Activated CD4-positive, alpha-beta T cell treated with anti-CD3 and anti-CD28 coated beads for 36 hours (primary cell): ENCODE measurements at regions of chr11 and their contacts with region 1.

Region 1: GRCh38 chr11:69683764-69684333 is 8.7 kb upstream of the LTO1 start:
- DNase-seq: no peak
- ATAC-seq: no peak
- H3K4me3 Mint-ChIP-seq: no peak overlapping the region
- H3K27ac Mint-ChIP-seq: no peak overlapping the region
- H3K4me1 Mint-ChIP-seq: peaks cover 11% of the 10 kb centered on the region
- H3K27me3 Mint-ChIP-seq: peaks cover 9% of the 10 kb centered on the region

Region 2: GRCh38 chr11:69700278-69701140 is 16.7 kb after region 1 on chr11:
- CTCF ChIA-PET with region 1: no interaction called
- POLR2A ChIA-PET with region 1: no interaction called
- intact Hi-C with region 1: no loop called
- DNase-seq: no peak
- ATAC-seq: no peak
- H3K4me3 Mint-ChIP-seq: no peak overlapping the region
- H3K27ac Mint-ChIP-seq: no peak overlapping the region
- H3K4me1 Mint-ChIP-seq: peaks cover 4% of the 10 kb centered on the region
- H3K27me3 Mint-ChIP-seq: peaks cover 43% of the 10 kb centered on the region

Region 3: GRCh38 chr11:69801519-69802335 is 117.9 kb after region 1 on chr11:
- CTCF ChIA-PET with region 1: interaction called, 3 read pairs
- POLR2A ChIA-PET with region 1: no interaction called
- intact Hi-C with region 1: loop called in 1 of 2 experiments (anchors 1 kb)
- DNase-seq: peak; percentile 60
- ATAC-seq: no peak
- H3K4me3 Mint-ChIP-seq: no peak overlapping the region
- H3K27ac Mint-ChIP-seq: no peak overlapping the region
- H3K4me1 Mint-ChIP-seq: no peaks in the 10 kb centered on the region
- H3K27me3 Mint-ChIP-seq: peaks cover 2% of the 10 kb centered on the region

Region 4: DNA sequence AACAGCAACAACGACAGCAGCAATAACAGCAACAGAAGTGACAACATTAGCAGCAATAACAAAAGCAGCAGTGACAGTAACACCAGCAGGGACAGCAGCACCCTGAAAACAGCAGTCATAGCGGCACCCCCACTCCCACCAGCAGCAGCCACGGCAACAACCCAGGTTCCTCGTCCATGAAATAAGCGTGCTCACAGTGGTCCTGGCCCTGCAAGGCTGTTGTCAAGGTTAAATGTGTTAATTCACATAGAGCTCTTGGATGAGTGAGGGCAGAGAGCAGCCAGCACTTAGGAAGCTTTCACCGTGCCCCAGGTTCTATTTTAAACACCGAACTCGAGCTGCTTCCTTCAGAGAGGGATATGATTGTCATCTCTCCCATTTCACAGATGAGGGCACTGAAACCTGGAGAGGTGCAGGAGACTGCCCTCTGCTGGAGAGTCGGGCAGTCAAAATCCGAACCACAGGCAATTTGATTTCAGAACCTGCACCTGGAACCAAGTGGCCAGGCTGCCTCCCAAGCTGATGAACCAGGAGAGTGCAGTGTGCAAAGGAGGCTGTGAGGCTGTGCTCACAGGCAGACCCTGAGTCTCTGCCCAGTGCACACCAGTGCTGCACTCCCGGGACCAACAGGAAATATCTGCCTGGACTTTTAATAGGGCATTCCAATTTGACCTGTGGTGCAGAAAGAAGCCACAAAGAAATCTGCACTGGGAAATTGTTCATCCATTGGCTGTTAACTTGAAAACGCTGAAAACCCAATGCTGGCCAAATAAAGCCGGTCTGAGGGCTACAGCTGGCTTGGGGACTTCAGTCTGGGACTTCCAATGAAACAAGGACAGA is 158.2 kb after region 1 on chr11:
- CTCF ChIA-PET with region 1: no interaction called
- POLR2A ChIA-PET with region 1: no interaction called
- intact Hi-C with region 1: loop called (anchors 1 to 5 kb)
- DNase-seq: peak; percentile 53
- ATAC-seq: no peak
- H3K4me3 Mint-ChIP-seq: no peak overlapping the region
- H3K27ac Mint-ChIP-seq: no peak overlapping the region
- H3K4me1 Mint-ChIP-seq: no peaks in the 10 kb centered on the region
- H3K27me3 Mint-ChIP-seq: peaks cover 11% of the 10 kb centered on the region

Region 5: GRCh38 chr11:69888483-69889076 is 204.7 kb after region 1 on chr11:
- CTCF ChIA-PET with region 1: interaction called, 4 read pairs
- POLR2A ChIA-PET with region 1: no interaction called
- intact Hi-C with region 1: loop called (anchors 1 kb)
- DNase-seq: peak; percentile 80
- ATAC-seq: peak; percentile 64
- H3K4me3 Mint-ChIP-seq: no peak overlapping the region
- H3K27ac Mint-ChIP-seq: no peak overlapping the region
- H3K4me1 Mint-ChIP-seq: peaks cover 2% of the 10 kb centered on the region
- H3K27me3 Mint-ChIP-seq: peaks cover 14% of the 10 kb centered on the region

Region 6: DNA sequence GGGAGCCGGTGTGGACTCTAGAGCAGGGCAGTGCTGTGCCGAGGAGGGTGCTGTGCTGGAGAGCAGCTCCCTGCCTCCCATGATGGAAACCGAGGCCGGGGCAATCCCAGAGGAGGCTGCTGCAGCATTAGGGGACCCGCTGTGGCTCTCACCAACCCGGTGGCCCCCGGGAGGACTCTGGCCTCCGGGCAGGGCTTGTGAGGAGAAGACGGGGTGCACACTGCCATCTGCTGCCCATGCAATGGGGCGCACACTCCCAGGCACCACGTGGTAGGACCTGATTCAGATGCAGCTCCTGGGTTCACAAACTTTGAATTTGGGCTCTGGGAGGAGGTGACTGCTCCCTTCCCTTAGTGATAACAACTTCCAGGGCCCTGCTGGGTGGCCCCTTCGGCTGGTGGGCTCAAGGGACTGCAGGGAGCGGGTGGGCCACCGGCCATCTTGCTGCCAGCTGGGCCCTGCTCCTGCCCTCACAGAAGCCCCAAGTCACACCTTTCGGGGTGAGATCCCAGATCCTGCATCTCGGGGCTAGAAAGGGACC is 229.1 kb after region 1 on chr11:
- CTCF ChIA-PET with region 1: no interaction called
- POLR2A ChIA-PET with region 1: no interaction called
- intact Hi-C with region 1: loop called in 1 of 2 experiments (anchors 1 kb)
- DNase-seq: peak; percentile 55
- ATAC-seq: peak; percentile 74
- H3K4me3 Mint-ChIP-seq: no peak overlapping the region
- H3K27ac Mint-ChIP-seq: no peak overlapping the region
- H3K4me1 Mint-ChIP-seq: no peaks in the 10 kb centered on the region
- H3K27me3 Mint-ChIP-seq: peaks cover 25% of the 10 kb centered on the region

Region 7: DNA sequence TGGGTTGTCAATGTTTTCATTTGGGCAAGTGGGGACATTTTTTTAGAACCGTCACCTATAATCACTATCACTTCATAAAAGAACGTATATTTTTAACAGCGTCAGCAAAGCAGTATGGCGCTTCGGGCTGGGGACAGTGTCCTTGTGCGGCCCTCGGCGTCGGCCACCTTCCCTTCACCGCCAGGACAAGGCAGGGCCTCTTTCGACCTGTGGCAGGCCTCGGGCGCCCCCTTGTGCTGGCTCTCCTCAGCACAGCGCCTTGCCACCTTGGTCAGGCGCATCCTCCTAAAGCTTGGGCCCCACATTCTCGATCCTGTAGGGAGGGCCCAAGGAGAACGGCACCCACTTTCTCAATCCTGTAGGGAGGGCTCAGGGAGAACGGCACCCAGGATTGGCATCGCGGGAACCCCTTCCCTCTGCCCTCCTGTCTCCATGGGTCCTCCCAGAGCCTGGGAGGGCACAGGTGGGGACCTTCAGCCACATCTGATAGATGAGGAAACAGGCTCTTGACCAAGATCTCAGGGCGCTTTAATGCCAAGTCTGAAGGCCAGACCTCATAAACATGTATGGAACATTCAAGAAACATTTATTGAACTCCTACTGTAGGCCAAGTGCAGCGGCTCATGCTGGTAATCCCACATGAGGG is 507.8 kb after region 1 on chr11:
- CTCF ChIA-PET with region 1: no interaction called
- POLR2A ChIA-PET with region 1: no interaction called
- intact Hi-C with region 1: loop called (anchors 1 to 10 kb)
- DNase-seq: peak; percentile 84
- ATAC-seq: peak; percentile 89
- H3K4me3 Mint-ChIP-seq: no peak overlapping the region
- H3K27ac Mint-ChIP-seq: no peak overlapping the region
- H3K4me1 Mint-ChIP-seq: no peaks in the 10 kb centered on the region
- H3K27me3 Mint-ChIP-seq: peaks cover 9% of the 10 kb centered on the region